CD4-positive, alpha-beta memory T cell (primary cell): ENCODE measurements at regions of chr2 and their contacts with region 1.

Region 1: GRCh38 chr2:241355983-241356870 is at the start of gene FARP2:
- DNase-seq: peak; percentile 97 to 99 (median 98)
- H3K4me3 ChIP-seq: peak within 1 kb of the TSS; percentile 47 to 63
- H3K4me3 Mint-ChIP-seq: peak within 1 kb of the TSS; percentile 82 to 89 (median 86)
- H3K27ac ChIP-seq: peak within 1 kb of the TSS; percentile 57
- H3K27ac Mint-ChIP-seq: peak within 1 kb of the TSS; percentile 77 to 97 (median 93)
- H3K4me1 ChIP-seq: peaks cover 15% of the 10 kb centered on the region
- H3K4me1 Mint-ChIP-seq: peaks cover 6 to 26% (median 15%) of the 10 kb centered on the region in 4 donors
- H3K27me3 ChIP-seq: no peaks in the 10 kb centered on the region
- H3K27me3 Mint-ChIP-seq: no peaks in the 10 kb centered on the region
- total RNA-seq, gene FARP2: 17.2 to 21.8 TPM

Region 2: DNA sequence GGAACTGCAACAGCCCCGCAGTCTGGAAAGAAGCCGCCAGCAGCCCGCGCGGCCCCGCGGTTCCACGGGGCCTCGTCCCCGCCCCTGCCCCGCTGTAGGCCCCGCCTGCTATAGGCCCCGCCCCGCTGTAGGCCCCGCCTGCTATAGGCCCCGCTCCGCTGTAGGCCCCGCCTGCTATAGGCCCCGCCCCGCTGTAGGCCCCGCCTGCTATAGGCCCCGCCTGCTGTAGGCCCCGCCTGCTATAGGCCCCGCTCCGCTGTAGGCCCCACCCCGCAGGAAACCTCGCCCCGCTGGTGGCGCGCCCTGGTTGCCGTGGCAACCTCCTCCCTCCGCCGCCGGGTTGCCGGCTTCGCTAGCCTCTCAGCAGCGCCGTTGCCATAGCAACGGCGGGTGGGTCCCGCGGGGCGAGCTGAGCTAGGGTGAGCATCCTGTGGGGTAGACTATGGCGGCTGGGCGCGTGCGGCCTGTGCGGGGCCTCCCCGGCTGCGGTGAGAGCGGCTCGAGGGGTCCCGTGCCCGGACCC is 524.0 kb before region 1 on chr2:
- CTCF ChIA-PET with region 1: no interaction called
- POLR2A ChIA-PET with region 1: no interaction called
- intact Hi-C with region 1: loop called (anchors 5 kb)
- DNase-seq: peak; percentile 98 to 99 (median 99)
- H3K4me3 ChIP-seq: peak overlapping the region; percentile 34 to 36
- H3K4me3 Mint-ChIP-seq: peak overlapping the region in 6 of 8 donors; percentile 12 to 81 (median 66)
- H3K27ac ChIP-seq: no peak overlapping the region
- H3K27ac Mint-ChIP-seq: peak overlapping the region in 3 of 7 donors; percentile 55 to 91 (median 82)
- H3K4me1 ChIP-seq: peaks cover 12% of the 10 kb centered on the region
- H3K4me1 Mint-ChIP-seq: peaks cover 0 to 6% (median 3%) of the 10 kb centered on the region in 4 donors
- H3K27me3 ChIP-seq: peaks cover 10% of the 10 kb centered on the region
- H3K27me3 Mint-ChIP-seq: peaks cover 8 to 16% of the 10 kb centered on the region in 2 donors

Region 3: DNA sequence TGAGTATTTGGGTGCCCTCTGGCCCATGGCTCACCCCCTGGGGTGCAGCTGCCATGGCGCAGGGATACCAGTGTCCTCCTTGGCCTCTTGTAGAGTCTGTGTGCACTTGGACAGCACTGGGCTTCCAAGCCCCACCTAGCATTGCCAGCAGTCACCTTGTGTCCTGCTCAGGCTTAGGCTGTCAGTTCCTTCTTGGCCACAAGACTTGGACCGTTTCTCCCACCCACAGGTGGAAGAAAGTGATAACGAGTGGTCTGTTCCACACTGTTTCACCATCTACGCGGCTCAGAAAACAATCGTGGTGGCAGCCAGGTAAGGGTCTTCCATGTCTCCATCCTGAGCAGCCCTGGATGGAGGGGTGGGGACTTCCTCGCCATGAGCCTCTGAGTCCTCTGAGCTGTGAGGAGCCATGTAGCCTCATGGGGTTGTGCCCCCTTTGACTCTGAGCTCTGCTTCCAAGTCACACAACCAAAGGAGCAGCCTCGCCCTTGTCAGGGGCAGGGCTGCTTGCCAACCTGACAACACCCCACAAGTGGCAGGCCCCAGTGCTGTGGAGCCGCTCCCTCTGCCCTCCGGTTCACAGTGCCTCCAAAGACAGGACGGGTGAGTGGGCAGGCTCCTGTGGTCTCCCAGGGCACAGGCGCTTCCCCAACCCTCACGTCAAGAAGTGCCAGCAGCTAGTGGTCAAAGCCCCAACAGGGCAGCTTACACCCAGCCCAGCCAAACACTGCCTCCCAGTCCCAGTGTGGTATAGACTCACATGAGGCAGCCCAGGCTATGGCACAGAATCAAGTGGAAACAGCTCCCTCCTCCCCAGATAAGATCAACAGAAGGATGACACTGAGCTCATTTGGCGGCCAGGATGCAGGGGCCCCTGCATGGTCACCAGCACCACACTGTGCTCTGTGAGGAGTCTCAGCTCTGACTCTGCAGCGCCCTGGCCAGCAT is 133.8 kb after region 1 on chr2:
- CTCF ChIA-PET with region 1: no interaction called
- POLR2A ChIA-PET with region 1: no interaction called
- intact Hi-C with region 1: no loop called
- DNase-seq: no peak
- H3K4me3 ChIP-seq: no peak overlapping the region
- H3K4me3 Mint-ChIP-seq: no peak overlapping the region
- H3K27ac ChIP-seq: no peak overlapping the region
- H3K27ac Mint-ChIP-seq: peak overlapping the region in 1 of 7 donors; percentile 35
- H3K4me1 ChIP-seq: no peaks in the 10 kb centered on the region
- H3K4me1 Mint-ChIP-seq: peaks cover 0 to 3% (median 0%) of the 10 kb centered on the region in 4 donors
- H3K27me3 ChIP-seq: no peaks in the 10 kb centered on the region
- H3K27me3 Mint-ChIP-seq: no peaks in the 10 kb centered on the region

Region 4: GRCh38 chr2:241617431-241618154 is 261.4 kb after region 1 on chr2:
- CTCF ChIA-PET with region 1: no interaction called
- POLR2A ChIA-PET with region 1: no interaction called
- intact Hi-C with region 1: loop called (anchors 5 kb)
- DNase-seq: peak; percentile 52 to 65 (median 59)
- H3K4me3 ChIP-seq: peak overlapping the region; percentile 54 to 67
- H3K4me3 Mint-ChIP-seq: peak overlapping the region; percentile 85 to 96 (median 90)
- H3K27ac ChIP-seq: peak overlapping the region; percentile 55
- H3K27ac Mint-ChIP-seq: peak overlapping the region; percentile 74 to 95 (median 90)
- H3K4me1 ChIP-seq: peaks cover 29% of the 10 kb centered on the region
- H3K4me1 Mint-ChIP-seq: peaks cover 22 to 44% (median 30%) of the 10 kb centered on the region in 4 donors
- H3K27me3 ChIP-seq: no peaks in the 10 kb centered on the region
- H3K27me3 Mint-ChIP-seq: no peaks in the 10 kb centered on the region